ENCODE measurements at regions of chr11 and their contacts with region 1.

Region 1: GRCh38 chr11:59283825-59284772 is 71.4 kb upstream of the MPEG1 start:
- DNase-seq: peak; percentile 57
- ATAC-seq: peak; percentile 88
- H3K4me3 ChIP-seq: no peak overlapping the region
- H3K27ac ChIP-seq: no peak overlapping the region
- H3K4me1 ChIP-seq: no peaks in the 10 kb centered on the region
- H3K27me3 ChIP-seq: peaks cover 25% of the 10 kb centered on the region
- CTCF ChIP-seq: peak; percentile 84
- POLR2A ChIP-seq: no peak
- RAD21 ChIP-seq: peak; percentile 75

Region 2: GRCh38 chr11:59207988-59208451 is 76.1 kb before region 1 on chr11:
- CTCF ChIA-PET with region 1: no interaction called
- POLR2A ChIA-PET with region 1: no interaction called
- dilution Hi-C with region 1: no loop called
- in situ Hi-C with region 1: no loop called
- intact Hi-C with region 1: loop called (anchors 1 kb)
- DNase-seq: peak; percentile 91
- ATAC-seq: peak; percentile 62
- H3K4me3 ChIP-seq: no peak overlapping the region
- H3K27ac ChIP-seq: no peak overlapping the region
- H3K4me1 ChIP-seq: peaks cover 13% of the 10 kb centered on the region
- H3K27me3 ChIP-seq: peaks cover 9% of the 10 kb centered on the region
- CTCF ChIP-seq: peak; percentile 70
- POLR2A ChIP-seq: no peak
- RAD21 ChIP-seq: peak; percentile 74

Region 3: DNA sequence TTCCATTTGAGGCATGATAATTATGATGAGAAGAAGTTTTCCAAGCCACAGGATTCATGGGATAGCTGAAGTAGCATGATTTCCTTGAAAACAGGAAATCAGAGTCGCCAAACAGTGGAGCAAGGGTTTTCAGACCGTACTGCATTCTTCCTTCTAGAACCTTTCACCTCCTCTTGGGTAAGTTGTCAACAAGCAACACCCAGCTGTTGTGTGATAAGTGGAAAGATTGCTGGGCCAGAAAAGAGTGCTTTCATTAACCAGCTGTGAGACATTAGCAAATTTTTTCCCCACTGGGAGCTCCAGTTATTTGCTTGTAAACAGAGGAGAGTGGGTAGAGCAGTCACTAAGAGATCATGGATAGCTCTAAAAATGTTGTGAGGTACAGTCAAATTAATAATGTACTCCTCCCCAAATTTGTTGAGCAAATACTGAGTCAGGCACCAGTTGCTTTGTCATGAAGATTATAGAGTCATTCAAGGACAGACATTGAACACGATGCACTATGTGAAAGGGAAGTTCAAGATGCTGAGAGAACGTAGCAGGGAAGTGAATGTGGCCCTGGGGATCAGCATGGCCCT is 59.7 kb before region 1 on chr11:
- CTCF ChIA-PET with region 1: no interaction called
- POLR2A ChIA-PET with region 1: no interaction called
- dilution Hi-C with region 1: no loop called
- in situ Hi-C with region 1: no loop called
- intact Hi-C with region 1: loop called (anchors 5 kb)
- DNase-seq: no peak
- ATAC-seq: peak; percentile 6
- H3K4me3 ChIP-seq: no peak overlapping the region
- H3K27ac ChIP-seq: peak overlapping the region; percentile 80; the same call in 1 of the 2 replicates
- H3K4me1 ChIP-seq: peaks cover 24% of the 10 kb centered on the region
- H3K27me3 ChIP-seq: no peaks in the 10 kb centered on the region
- CTCF ChIP-seq: no peak
- POLR2A ChIP-seq: no peak
- RAD21 ChIP-seq: no peak

Region 4: GRCh38 chr11:59429924-59430516 is 145.9 kb after region 1 on chr11:
- CTCF ChIA-PET with region 1: interaction called, 3 read pairs
- POLR2A ChIA-PET with region 1: no interaction called
- dilution Hi-C with region 1: no loop called
- in situ Hi-C with region 1: no loop called
- intact Hi-C with region 1: loop called (anchors 1 kb)
- DNase-seq: peak; percentile 45
- ATAC-seq: peak; percentile 75
- H3K4me3 ChIP-seq: no peak overlapping the region
- H3K27ac ChIP-seq: no peak overlapping the region
- H3K4me1 ChIP-seq: no peaks in the 10 kb centered on the region
- H3K27me3 ChIP-seq: no peaks in the 10 kb centered on the region; the same call in 1 of the 2 replicates
- CTCF ChIP-seq: peak; percentile 74
- POLR2A ChIP-seq: no peak
- RAD21 ChIP-seq: peak; percentile 65

Region 5: DNA sequence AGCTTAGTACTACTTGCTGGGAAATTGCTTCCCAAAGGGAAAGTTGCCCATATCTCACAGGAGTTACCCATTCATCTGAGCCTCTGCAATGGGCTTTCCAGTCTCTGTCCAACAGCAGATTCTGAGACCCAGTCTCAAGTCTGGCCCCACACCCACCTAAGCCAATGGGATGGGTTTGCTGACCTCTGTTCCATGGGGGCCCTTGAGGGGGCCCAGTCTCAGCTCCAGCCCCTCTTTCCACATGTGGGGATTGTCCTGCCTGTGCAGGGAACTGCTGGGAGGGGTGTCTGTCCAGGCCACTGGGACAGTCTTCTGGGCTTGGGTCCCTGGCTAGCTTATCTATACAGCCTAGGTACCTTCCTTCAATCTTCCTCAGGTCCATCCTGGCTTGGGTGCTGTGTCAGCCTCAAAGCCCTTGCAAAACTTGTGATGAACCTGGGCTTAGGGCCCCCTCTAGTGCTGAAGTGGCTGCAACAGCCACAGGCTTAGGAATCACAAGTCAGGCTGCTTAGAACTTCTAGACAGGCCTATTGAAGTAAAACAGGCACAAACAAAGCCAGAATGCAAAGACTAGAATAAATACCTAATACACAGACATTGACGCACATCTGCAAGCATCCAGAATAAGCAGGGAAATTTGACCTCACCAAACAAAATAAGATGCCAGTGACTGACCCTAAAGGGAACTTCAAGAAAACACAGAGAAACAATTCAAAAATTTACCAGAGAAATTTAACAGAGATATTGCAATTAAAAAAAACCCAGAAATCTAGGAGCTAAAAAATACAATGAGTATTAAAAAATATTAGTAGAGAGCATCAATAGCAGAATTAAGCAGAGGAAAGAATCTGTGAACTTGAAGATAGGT is 396.4 kb after region 1 on chr11:
- CTCF ChIA-PET with region 1: no interaction called
- POLR2A ChIA-PET with region 1: no interaction called
- dilution Hi-C with region 1: no loop called
- in situ Hi-C with region 1: no loop called
- intact Hi-C with region 1: loop called (anchors 5 kb)
- DNase-seq: peak; percentile 83
- ATAC-seq: peak; percentile 100
- H3K4me3 ChIP-seq: no peak overlapping the region
- H3K27ac ChIP-seq: no peak overlapping the region
- H3K4me1 ChIP-seq: no peaks in the 10 kb centered on the region
- H3K27me3 ChIP-seq: no peaks in the 10 kb centered on the region
- CTCF ChIP-seq: peak; percentile 87
- POLR2A ChIP-seq: no peak
- RAD21 ChIP-seq: peak; percentile 88